CD4-positive, alpha-beta memory T cell (primary cell): ENCODE measurements at regions of chr15 and their contacts with region 1.

Region 1: GRCh38 chr15:38699633-38700230 is 135.1 kb upstream of the RASGRP1 start:
- DNase-seq: peak; percentile 61 to 73 (median 67)
- H3K4me3 ChIP-seq: no peak overlapping the region
- H3K4me3 Mint-ChIP-seq: peak overlapping the region in 5 of 8 donors; percentile 1 to 66 (median 35)
- H3K27ac ChIP-seq: peak overlapping the region; percentile 4
- H3K27ac Mint-ChIP-seq: peak overlapping the region; percentile 48 to 93 (median 86)
- H3K4me1 ChIP-seq: peaks cover 64% of the 10 kb centered on the region
- H3K4me1 Mint-ChIP-seq: peaks cover 38 to 58% (median 50%) of the 10 kb centered on the region in 4 donors
- H3K27me3 ChIP-seq: no peaks in the 10 kb centered on the region
- H3K27me3 Mint-ChIP-seq: no peaks in the 10 kb centered on the region

Region 2: DNA sequence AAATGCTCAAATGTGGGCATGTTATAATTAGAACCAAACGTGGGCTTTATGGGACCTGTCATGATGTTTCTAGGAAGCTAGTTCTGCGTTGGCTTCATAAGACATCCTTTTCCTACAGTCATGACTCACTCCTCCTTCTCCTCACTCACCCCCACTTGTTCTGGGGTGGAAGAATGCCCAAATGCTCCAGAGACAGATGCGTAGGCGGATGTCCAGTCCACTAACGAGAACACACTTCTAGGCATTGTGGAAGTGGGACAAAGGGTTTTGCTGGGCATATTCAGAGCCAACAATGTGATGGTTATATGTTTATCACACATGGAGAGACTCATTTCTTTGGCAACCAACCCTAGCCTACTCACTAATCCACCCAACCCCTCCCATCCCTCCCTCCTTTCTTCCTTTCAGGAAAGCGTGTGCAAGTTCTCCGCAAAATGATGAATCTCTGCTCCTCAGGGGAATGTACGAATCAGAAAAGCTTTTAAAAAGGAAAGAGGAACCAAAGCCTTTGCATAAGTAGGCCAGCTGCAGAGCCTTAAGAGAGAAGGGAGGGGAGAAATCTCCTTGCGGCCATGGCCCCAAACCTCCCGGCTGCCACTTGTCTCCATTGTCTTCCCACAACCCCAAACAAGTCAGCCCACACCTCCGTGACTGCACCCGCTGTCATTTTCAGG is 570.1 kb before region 1 on chr15:
- CTCF ChIA-PET with region 1: no interaction called
- POLR2A ChIA-PET with region 1: no interaction called
- intact Hi-C with region 1: no loop called
- DNase-seq: no peak
- H3K4me3 ChIP-seq: no peak overlapping the region
- H3K4me3 Mint-ChIP-seq: no peak overlapping the region
- H3K27ac ChIP-seq: no peak overlapping the region
- H3K27ac Mint-ChIP-seq: peak overlapping the region in 1 of 7 donors; percentile 14
- H3K4me1 ChIP-seq: no peaks in the 10 kb centered on the region
- H3K4me1 Mint-ChIP-seq: peaks cover 0 to 15% (median 3%) of the 10 kb centered on the region in 4 donors
- H3K27me3 ChIP-seq: no peaks in the 10 kb centered on the region
- H3K27me3 Mint-ChIP-seq: peaks cover 4 to 5% of the 10 kb centered on the region in 2 donors

Region 3: GRCh38 chr15:38440353-38441129 is 259.2 kb before region 1 on chr15:
- CTCF ChIA-PET with region 1: interaction called, 175 read pairs
- POLR2A ChIA-PET with region 1: interaction called, 12 read pairs
- intact Hi-C with region 1: loop called (anchors 1 kb)
- DNase-seq: peak in 4 of 5 donors; percentile 59 to 66 (median 62)
- H3K4me3 ChIP-seq: no peak overlapping the region
- H3K4me3 Mint-ChIP-seq: peak overlapping the region in 1 of 8 donors; percentile 55
- H3K27ac ChIP-seq: no peak overlapping the region
- H3K27ac Mint-ChIP-seq: peak overlapping the region in 1 of 7 donors; percentile 12
- H3K4me1 ChIP-seq: peaks cover 5% of the 10 kb centered on the region
- H3K4me1 Mint-ChIP-seq: peaks cover 0 to 7% (median 3%) of the 10 kb centered on the region in 4 donors
- H3K27me3 ChIP-seq: no peaks in the 10 kb centered on the region
- H3K27me3 Mint-ChIP-seq: peaks cover 20 to 21% of the 10 kb centered on the region in 2 donors

Region 4: GRCh38 chr15:38479266-38479665 is 220.5 kb before region 1 on chr15:
- CTCF ChIA-PET with region 1: interaction called, 146 read pairs
- POLR2A ChIA-PET with region 1: interaction called, 15 read pairs
- intact Hi-C with region 1: loop called (anchors 1 kb)
- DNase-seq: no peak
- H3K4me3 ChIP-seq: no peak overlapping the region
- H3K4me3 Mint-ChIP-seq: no peak overlapping the region
- H3K27ac ChIP-seq: no peak overlapping the region
- H3K27ac Mint-ChIP-seq: peak overlapping the region in 3 of 7 donors; percentile 37 to 70 (median 48)
- H3K4me1 ChIP-seq: peaks cover 22% of the 10 kb centered on the region
- H3K4me1 Mint-ChIP-seq: peaks cover 21 to 32% (median 29%) of the 10 kb centered on the region in 4 donors
- H3K27me3 ChIP-seq: no peaks in the 10 kb centered on the region
- H3K27me3 Mint-ChIP-seq: no peaks in the 10 kb centered on the region

Region 5: GRCh38 chr15:38514601-38515000 is 185.1 kb before region 1 on chr15:
- CTCF ChIA-PET with region 1: interaction called, 20 read pairs
- POLR2A ChIA-PET with region 1: no interaction called
- intact Hi-C with region 1: no loop called
- DNase-seq: no peak
- H3K4me3 ChIP-seq: no peak overlapping the region
- H3K4me3 Mint-ChIP-seq: no peak overlapping the region
- H3K27ac ChIP-seq: no peak overlapping the region
- H3K27ac Mint-ChIP-seq: peak overlapping the region; percentile 15 to 90 (median 72)
- H3K4me1 ChIP-seq: peaks cover 7% of the 10 kb centered on the region
- H3K4me1 Mint-ChIP-seq: peaks cover 12 to 24% (median 19%) of the 10 kb centered on the region in 4 donors
- H3K27me3 ChIP-seq: no peaks in the 10 kb centered on the region
- H3K27me3 Mint-ChIP-seq: no peaks in the 10 kb centered on the region

Region 6: DNA sequence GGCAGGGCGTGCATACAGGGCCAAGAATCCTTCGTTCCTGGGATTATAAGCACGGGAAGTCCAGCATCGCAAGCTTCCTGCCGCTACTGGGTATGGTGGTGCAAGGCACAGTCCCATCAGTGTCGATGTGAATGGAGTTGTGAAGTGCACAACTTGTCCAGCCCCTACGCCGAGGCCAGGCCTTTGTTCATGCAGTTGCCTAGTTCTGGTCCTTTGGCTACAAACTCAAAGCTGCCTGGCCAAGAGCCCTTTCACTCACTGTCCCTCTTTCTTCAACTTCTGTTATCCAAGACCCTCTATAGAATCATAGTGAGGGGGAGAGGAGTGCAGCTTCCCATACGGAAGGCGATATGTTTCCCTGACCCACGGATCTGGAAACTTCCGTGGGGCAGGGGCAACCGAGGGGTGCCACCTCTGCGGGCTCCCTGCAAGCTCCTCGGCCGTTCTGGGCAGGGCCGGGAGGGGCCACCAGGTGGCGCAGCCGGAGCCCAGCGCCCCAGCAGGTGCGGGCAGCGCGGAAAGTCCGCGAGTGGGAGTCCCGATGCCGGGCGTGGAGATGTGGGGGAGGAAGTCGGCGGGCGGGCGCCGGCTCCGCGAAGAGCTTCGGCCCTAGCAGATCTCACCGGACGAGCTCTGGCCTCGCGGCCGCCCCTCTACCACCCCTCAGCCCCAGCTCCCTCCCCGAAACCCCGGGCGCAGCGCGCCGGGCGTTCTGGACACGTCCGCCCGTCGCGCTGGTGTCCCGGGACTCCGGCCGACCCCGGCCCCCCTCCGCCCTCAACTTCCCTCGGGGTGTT is 135.8 kb before region 1 on chr15:
- CTCF ChIA-PET with region 1: interaction called, 717 read pairs
- POLR2A ChIA-PET with region 1: interaction called, 64 read pairs
- intact Hi-C with region 1: no loop called
- DNase-seq: peak; percentile 82 to 89 (median 84)
- H3K4me3 ChIP-seq: peak overlapping the region; percentile 95 to 97
- H3K4me3 Mint-ChIP-seq: peak overlapping the region; percentile 94 to 99 (median 98)
- H3K27ac ChIP-seq: peak overlapping the region; percentile 89
- H3K27ac Mint-ChIP-seq: peak overlapping the region; percentile 79 to 97 (median 95)
- H3K4me1 ChIP-seq: peaks cover 64% of the 10 kb centered on the region
- H3K4me1 Mint-ChIP-seq: peaks cover 44 to 78% (median 60%) of the 10 kb centered on the region in 4 donors
- H3K27me3 ChIP-seq: no peaks in the 10 kb centered on the region
- H3K27me3 Mint-ChIP-seq: no peaks in the 10 kb centered on the region

Region 7: DNA sequence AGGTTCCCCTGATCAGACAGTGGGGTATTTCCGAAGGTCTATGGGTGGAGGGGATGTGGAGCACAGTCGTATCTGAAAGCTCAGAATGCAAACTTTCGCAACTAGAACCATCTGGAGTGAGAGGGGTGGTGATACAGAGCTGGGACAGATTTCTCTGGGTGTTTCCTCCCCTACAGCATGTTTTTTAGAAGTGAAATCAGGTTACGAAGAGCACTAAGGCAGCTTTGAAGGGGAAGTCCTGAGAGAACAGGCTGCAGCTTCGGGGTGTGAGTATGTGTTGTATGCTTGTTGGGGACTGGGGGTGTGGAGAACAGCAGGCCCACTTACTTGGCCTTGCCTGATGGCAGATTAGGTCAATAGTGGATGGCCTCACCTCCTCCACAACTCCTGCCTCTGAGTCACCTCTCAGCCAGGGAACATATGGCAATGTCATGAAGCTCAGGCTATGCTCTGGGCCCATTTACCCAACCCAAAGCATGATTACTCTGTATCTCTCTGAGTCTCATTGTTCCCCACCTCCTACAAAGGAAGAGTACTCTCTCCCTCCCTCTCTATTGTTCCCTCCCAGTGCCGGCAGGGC is 28.0 kb before region 1 on chr15:
- CTCF ChIA-PET with region 1: interaction called, 22 read pairs
- POLR2A ChIA-PET with region 1: interaction called, 26 read pairs
- intact Hi-C with region 1: no loop called
- DNase-seq: peak; percentile 70 to 87 (median 78)
- H3K4me3 ChIP-seq: peak overlapping the region; percentile 1 to 24
- H3K4me3 Mint-ChIP-seq: peak overlapping the region in 7 of 8 donors; percentile 67 to 79 (median 72)
- H3K27ac ChIP-seq: peak overlapping the region; percentile 89
- H3K27ac Mint-ChIP-seq: peak overlapping the region; percentile 94 to 100 (median 99)
- H3K4me1 ChIP-seq: peaks cover 83% of the 10 kb centered on the region
- H3K4me1 Mint-ChIP-seq: peaks cover 57 to 79% (median 64%) of the 10 kb centered on the region in 4 donors
- H3K27me3 ChIP-seq: no peaks in the 10 kb centered on the region
- H3K27me3 Mint-ChIP-seq: no peaks in the 10 kb centered on the region